Left colon (tissue), 2 donors: ENCODE measurements at regions of chr11 and their contacts with region 1.

Region 1: GRCh38 chr11:86811637-86812321 is 11.4 kb downstream of the PRSS23 start:
- DNase-seq: no peak
- ATAC-seq: peak; percentile 56

Region 2: GRCh38 chr11:86608251-86608799 is 203.5 kb before region 1 on chr11:
- intact Hi-C with region 1: loop called in 1 of 2 experiments (anchors 5 kb)
- DNase-seq: peak in 1 of 2 donors; percentile 62
- ATAC-seq: peak; percentile 89